Activated naive CD4-positive, alpha-beta T cell treated with anti-CD3 and anti-CD28 coated beads for 36 hours (primary cell): ENCODE measurements at regions of chr2 and their contacts with region 1.

Region 1: DNA sequence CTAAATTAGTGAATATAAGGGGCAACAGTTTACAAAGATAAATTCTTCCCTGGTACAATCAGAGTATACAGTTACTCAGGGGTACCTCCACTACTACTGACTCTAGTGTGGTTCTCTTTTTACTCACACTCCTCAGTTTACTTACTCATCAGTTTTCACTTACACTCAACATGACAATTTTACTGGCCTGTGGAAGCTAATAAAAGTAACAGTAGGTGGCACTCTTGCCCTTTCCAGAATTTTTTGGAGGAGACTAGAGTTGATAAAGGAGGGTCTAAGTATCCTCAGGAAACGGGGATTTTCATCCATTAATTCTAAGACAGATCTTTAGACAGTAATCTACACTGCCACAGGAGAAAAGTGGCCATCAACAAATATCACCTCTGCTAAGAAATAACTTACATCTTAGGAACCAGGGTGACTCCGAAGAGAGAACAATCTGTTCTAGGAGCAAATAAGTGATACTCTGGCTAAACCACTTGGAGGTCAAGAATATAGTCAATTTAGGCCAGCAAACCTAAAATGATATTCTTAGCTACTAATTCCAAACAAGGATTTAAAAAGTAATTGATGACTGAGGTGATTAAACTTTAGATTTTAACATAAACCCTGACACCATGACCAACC is 61.3 kb downstream of the ATL2 start:
- DNase-seq: peak; percentile 32
- H3K4me3 Mint-ChIP-seq: no peak overlapping the region
- H3K27ac Mint-ChIP-seq: no peak overlapping the region
- H3K4me1 Mint-ChIP-seq: peaks cover 12% of the 10 kb centered on the region
- H3K27me3 Mint-ChIP-seq: no peaks in the 10 kb centered on the region

Region 2: DNA sequence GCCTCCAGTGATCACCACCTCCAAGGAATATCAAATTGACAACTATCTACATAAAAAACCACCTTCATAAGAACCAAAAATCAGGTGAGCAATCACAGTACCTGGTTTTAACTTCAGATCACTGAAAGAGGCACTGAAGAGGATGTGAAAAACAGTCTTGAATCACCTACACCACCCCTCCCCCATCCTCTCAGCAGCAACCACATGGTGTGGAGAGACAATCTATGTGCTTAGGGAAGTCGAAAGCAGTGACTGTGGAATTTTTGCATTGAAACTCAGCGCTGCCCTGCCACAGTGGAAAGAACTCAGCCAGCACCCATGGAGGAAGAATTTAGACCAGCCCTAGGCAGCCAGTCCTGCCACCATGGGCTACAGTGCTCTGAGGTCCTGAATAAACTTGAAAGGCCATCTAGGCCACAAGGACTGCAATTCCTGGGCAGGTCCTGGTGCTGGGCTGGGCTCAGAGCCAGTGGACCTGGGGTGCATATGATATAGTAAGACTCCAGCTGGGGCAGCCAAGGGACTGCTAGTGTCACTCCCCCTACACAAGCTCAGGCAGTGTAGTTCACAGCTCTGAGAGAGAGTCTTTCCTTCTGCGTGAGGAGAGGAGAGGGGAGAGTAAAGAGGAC is 14.4 kb before region 1 on chr2:
- CTCF ChIA-PET with region 1: interaction called, 4 read pairs
- intact Hi-C with region 1: loop called (anchors 1 kb)
- DNase-seq: peak; percentile 73
- H3K4me3 Mint-ChIP-seq: no peak overlapping the region
- H3K27ac Mint-ChIP-seq: no peak overlapping the region
- H3K4me1 Mint-ChIP-seq: peaks cover 36% of the 10 kb centered on the region
- H3K27me3 Mint-ChIP-seq: no peaks in the 10 kb centered on the region

Region 3: DNA sequence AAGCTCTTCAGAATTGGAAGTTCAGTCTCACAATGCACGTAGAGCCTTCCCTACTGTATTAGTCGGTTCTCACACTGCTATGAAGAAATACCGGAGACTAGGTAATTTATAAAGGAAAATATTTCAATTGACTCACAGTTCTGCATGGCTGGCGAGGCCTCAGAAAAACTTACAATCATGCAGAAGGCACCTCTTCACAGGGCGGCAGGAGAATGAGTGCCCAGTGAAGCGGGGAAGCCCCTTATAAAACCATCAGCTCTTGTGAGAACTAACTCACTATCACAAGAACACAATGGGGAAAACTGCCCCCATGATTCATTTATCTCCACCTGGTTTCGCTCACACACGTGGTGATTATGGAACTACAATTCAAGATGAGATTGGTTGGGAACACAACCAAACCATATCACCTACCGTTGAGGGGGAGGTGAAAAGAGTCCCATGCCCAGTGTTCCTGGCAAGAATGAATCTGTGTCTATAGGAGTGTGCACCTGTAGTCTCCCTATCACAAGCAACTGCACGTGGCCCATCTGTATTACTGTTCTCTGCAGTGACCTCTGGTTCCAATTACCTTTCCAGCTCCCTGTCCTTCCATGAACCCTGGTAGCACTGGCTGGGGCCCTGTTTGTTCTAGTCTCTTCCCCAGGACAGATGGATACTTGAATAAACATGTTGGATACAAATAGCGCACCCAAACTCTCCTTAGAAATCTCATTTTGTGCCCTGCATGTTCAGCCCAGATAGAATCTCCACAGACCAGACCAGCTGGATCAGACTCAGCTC is 105.6 kb after region 1 on chr2:
- CTCF ChIA-PET with region 1: no interaction called
- intact Hi-C with region 1: no loop called
- DNase-seq: no peak
- H3K4me3 Mint-ChIP-seq: no peak overlapping the region
- H3K27ac Mint-ChIP-seq: no peak overlapping the region
- H3K4me1 Mint-ChIP-seq: no peaks in the 10 kb centered on the region
- H3K27me3 Mint-ChIP-seq: no peaks in the 10 kb centered on the region

Region 4: GRCh38 chr2:38465789-38466127 is 149.9 kb after region 1 on chr2:
- CTCF ChIA-PET with region 1: interaction called, 22 read pairs
- intact Hi-C with region 1: loop called (anchors 1 kb)
- DNase-seq: peak; percentile 31
- H3K4me3 Mint-ChIP-seq: no peak overlapping the region
- H3K27ac Mint-ChIP-seq: no peak overlapping the region
- H3K4me1 Mint-ChIP-seq: peaks cover 9% of the 10 kb centered on the region
- H3K27me3 Mint-ChIP-seq: no peaks in the 10 kb centered on the region

Region 5: GRCh38 chr2:38494394-38494793 is 178.6 kb after region 1 on chr2:
- CTCF ChIA-PET with region 1: no interaction called
- intact Hi-C with region 1: no loop called
- DNase-seq: no peak
- H3K4me3 Mint-ChIP-seq: no peak overlapping the region
- H3K27ac Mint-ChIP-seq: no peak overlapping the region
- H3K4me1 Mint-ChIP-seq: no peaks in the 10 kb centered on the region
- H3K27me3 Mint-ChIP-seq: no peaks in the 10 kb centered on the region

Region 6: DNA sequence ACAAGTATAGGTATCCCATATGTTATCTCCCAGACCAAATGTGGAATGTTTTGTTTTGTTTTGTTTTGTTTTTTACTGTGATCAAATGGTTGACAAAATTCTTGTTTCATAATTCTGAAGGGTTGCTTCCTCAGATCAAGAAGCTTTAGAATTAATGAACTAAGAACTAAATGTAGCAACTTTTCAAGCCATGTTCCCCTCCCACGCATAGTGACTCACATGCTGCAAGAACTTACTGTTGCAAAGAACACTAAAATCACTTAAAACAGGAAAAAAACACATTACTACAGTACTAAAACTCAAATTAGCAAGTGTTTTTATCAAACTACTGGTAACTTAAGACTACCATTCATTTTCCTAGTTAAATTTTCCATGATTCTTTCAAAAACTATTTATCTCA is 256.3 kb after region 1 on chr2:
- CTCF ChIA-PET with region 1: no interaction called
- intact Hi-C with region 1: loop called (anchors 5 kb)
- DNase-seq: peak; percentile 68
- H3K4me3 Mint-ChIP-seq: no peak overlapping the region
- H3K27ac Mint-ChIP-seq: no peak overlapping the region
- H3K4me1 Mint-ChIP-seq: peaks cover 17% of the 10 kb centered on the region
- H3K27me3 Mint-ChIP-seq: no peaks in the 10 kb centered on the region